ENCODE measurements at regions of chr7 and their contacts with region 1.

Region 1: GRCh38 chr7:39357648-39358047 is 208.6 kb upstream of the YAE1 start:
- DNase-seq: no peak
- ATAC-seq: no peak
- H3K4me3 ChIP-seq: no peak overlapping the region
- H3K27ac ChIP-seq: no peak overlapping the region
- H3K4me1 ChIP-seq: peaks cover 7% of the 10 kb centered on the region; the same call in 1 of the 2 replicates
- H3K27me3 ChIP-seq: peaks cover 2% of the 10 kb centered on the region; the same call in 1 of the 2 replicates
- CTCF ChIP-seq: peak; percentile 70

Region 2: DNA sequence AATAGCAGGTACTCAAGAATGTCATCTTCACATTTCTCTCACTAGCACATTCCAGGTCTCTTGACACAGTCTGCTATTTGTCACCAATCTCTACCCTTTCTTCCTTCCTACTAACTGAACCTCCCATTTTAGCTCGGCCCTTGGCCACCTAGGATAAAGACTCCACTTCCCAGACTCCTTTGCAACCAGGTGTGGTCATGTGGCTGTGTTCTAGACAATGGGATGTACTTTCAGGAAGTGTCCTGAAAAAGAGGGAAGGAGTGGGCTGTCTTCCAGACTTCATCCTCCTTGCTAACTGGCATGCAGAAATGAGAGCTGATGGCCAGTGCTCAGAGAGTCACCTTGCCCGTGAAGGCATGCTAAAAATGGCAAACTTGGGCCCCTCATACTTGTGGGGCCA is 865.6 kb before region 1 on chr7:
- CTCF ChIA-PET with region 1: no interaction called
- POLR2A ChIA-PET with region 1: no interaction called
- in situ Hi-C with region 1: no loop called
- intact Hi-C with region 1: no loop called
- DNase-seq: no peak
- ATAC-seq: no peak
- H3K4me3 ChIP-seq: no peak overlapping the region
- H3K27ac ChIP-seq: no peak overlapping the region
- H3K4me1 ChIP-seq: no peaks in the 10 kb centered on the region
- H3K27me3 ChIP-seq: no peaks in the 10 kb centered on the region
- CTCF ChIP-seq: no peak

Region 3: GRCh38 chr7:39383136-39383535 is 25.5 kb after region 1 on chr7:
- CTCF ChIA-PET with region 1: interaction called, 12 read pairs
- POLR2A ChIA-PET with region 1: no interaction called
- in situ Hi-C with region 1: no loop called
- intact Hi-C with region 1: no loop called
- DNase-seq: no peak
- ATAC-seq: no peak
- H3K4me3 ChIP-seq: no peak overlapping the region
- H3K27ac ChIP-seq: no peak overlapping the region
- H3K4me1 ChIP-seq: no peaks in the 10 kb centered on the region
- H3K27me3 ChIP-seq: peaks cover 4% of the 10 kb centered on the region
- CTCF ChIP-seq: no peak

Measured in Panc1 (cell line).